Upper lobe of right lung (tissue), 1 donor: ENCODE measurements at regions of chr9 and their contacts with region 1.

Region 1: GRCh38 chr9:70602321-70603019 is 188.0 kb upstream of the KLF9 start:
- DNase-seq: no peak
- ATAC-seq: peak; percentile 82
- H3K4me3 ChIP-seq: no peak overlapping the region
- H3K27ac ChIP-seq: peak overlapping the region; percentile 86
- H3K4me1 ChIP-seq: peaks cover 25% of the 10 kb centered on the region
- H3K27me3 ChIP-seq: no peaks in the 10 kb centered on the region
- CTCF ChIP-seq: peak; percentile 78

Region 2: GRCh38 chr9:70352802-70353201 is 249.7 kb before region 1 on chr9:
- intact Hi-C with region 1: loop called (anchors 10 kb)
- DNase-seq: no peak
- ATAC-seq: no peak
- H3K4me3 ChIP-seq: no peak overlapping the region
- H3K27ac ChIP-seq: no peak overlapping the region
- H3K4me1 ChIP-seq: no peaks in the 10 kb centered on the region
- H3K27me3 ChIP-seq: no peaks in the 10 kb centered on the region
- CTCF ChIP-seq: peak; percentile 64

Region 3: GRCh38 chr9:70406434-70406862 is 196.0 kb before region 1 on chr9:
- intact Hi-C with region 1: loop called (anchors 10 kb)
- DNase-seq: no peak
- ATAC-seq: peak; percentile 68
- H3K4me3 ChIP-seq: peak overlapping the region; percentile 9
- H3K27ac ChIP-seq: peak overlapping the region; percentile 15
- H3K4me1 ChIP-seq: peaks cover 93% of the 10 kb centered on the region
- H3K27me3 ChIP-seq: no peaks in the 10 kb centered on the region
- CTCF ChIP-seq: no peak

Region 4: GRCh38 chr9:70484210-70485130 is 118.0 kb before region 1 on chr9:
- intact Hi-C with region 1: loop called (anchors 10 kb)
- DNase-seq: no peak
- ATAC-seq: peak; percentile 78
- H3K4me3 ChIP-seq: no peak overlapping the region
- H3K27ac ChIP-seq: peak overlapping the region; percentile 64
- H3K4me1 ChIP-seq: peaks cover 60% of the 10 kb centered on the region
- H3K27me3 ChIP-seq: no peaks in the 10 kb centered on the region
- CTCF ChIP-seq: peak; percentile 83